Activated CD8-positive, alpha-beta T cell treated with anti-CD3 and anti-CD28 coated beads, Interleukin-2, amount 10 ng/mL, durations not matched to agents 7 days and 5 days (primary cell): ENCODE measurements at regions of chr10 and their contacts with region 1.

Region 1: DNA sequence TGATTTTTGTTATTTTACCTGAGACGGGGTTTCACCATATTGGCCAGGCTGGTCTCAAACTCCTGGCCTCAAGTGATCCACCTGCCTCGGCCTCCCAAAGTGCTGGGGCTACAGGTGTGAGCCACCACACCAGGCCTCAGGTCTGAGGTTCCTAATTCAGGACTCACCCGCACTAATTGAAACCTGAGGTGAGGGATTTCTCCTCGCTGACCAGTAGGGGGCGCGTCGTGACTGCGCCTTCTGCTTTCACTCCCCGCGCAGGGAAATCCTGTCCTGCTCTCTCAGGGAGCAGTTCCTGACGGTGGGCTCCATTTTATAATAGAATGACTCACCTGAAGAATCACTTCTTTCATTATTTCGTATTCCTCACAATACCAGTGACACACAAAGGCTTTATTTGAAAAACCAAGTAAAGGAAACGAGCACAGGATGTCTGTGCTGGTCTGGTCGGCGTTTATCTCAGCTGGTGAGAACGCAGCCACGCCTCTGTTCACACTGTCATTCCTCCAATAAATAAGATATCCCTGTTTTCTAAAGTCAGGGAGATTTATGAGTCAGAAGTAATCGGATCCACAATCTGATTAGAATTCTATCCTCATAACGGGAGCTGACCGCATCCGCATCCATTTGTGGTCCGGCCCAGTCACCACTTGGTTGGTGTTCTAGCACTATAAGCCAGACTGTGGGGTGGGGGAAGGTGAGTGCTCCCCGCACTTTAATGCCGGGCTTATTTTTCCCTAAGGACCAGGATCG is 35.4 kb downstream of the BAG3 start:
- DNase-seq: peak; percentile 80
- ATAC-seq: peak; percentile 93
- H3K4me3 Mint-ChIP-seq: peak overlapping the region; percentile 60
- H3K27ac Mint-ChIP-seq: peak overlapping the region; percentile 53
- H3K4me1 Mint-ChIP-seq: peaks cover 26% of the 10 kb centered on the region
- H3K27me3 Mint-ChIP-seq: peaks cover 4% of the 10 kb centered on the region

Region 2: GRCh38 chr10:119634219-119634544 is 52.4 kb before region 1 on chr10:
- CTCF ChIA-PET with region 1: no interaction called
- POLR2A ChIA-PET with region 1: no interaction called
- DNase-seq: no peak
- ATAC-seq: no peak
- H3K4me3 Mint-ChIP-seq: no peak overlapping the region
- H3K27ac Mint-ChIP-seq: no peak overlapping the region
- H3K4me1 Mint-ChIP-seq: no peaks in the 10 kb centered on the region
- H3K27me3 Mint-ChIP-seq: peaks cover 2% of the 10 kb centered on the region

Region 3: DNA sequence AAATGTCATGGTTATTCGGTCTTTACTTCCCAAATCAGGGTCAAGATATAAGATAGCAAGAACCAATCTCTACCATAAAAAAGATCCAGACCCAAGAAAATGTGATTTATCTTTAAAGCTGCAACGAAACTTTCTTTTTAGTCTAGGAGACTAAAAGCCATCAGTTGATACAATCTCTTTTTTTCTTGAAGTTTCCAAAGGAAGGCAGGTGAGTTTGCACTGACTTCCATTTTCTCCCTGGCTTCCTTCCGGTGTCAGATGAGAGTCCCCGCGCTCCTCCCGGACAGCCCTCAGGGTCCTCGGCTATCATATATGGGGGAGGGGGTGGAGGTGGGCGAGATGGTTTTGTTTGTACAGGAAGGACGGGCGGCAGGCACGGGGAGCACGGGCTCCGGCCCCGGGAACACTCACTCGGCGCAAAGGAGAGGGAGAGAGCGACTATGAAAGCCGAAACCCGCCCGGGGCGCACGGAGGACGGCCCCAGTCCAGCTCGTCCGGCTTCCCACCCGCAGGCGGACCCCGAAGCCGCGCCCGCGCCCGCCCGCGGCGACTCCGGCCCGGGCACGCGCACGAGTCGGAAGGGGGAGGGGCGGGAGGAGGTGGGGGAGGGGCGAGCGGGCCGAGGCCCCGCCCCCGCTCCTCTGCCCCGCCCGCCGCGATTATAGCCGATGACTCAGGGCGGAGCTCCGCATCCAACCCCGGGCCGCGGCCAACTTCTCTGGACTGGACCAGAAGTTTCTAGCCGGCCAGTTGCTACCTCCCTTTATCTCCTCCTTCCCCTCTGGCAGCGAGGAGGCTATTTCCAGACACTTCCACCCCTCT is 35.7 kb before region 1 on chr10 and contains the start of gene BAG3:
- CTCF ChIA-PET with region 1: interaction called, 10 read pairs
- POLR2A ChIA-PET with region 1: no interaction called
- DNase-seq: peak; percentile 86
- ATAC-seq: peak; percentile 78
- H3K4me3 Mint-ChIP-seq: peak within 1 kb of the TSS; percentile 95
- H3K27ac Mint-ChIP-seq: peak within 1 kb of the TSS; percentile 97
- H3K4me1 Mint-ChIP-seq: peaks cover 41% of the 10 kb centered on the region
- H3K27me3 Mint-ChIP-seq: peaks cover 2% of the 10 kb centered on the region
- total RNA-seq, gene BAG3: 14.2 to 14.7 TPM

Region 4: DNA sequence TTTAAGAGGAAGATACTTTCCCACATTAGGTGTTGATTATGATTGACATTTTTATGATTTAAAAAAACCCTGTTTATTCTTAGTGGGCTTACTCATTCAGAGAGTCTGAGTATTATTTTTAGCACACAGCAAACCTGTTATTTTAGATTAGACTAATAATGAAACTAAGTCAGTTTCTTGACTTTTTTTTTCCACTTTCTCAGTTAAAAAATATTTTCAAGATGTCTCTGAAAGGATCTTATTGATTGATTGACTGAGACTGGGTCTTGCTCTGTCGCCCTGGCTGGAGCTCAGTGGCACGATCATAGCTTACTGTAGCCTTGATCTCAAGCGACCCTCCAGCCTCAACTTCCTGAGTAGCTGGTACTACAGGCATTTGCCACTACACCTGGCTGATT is 18.8 kb after region 1 on chr10:
- CTCF ChIA-PET with region 1: interaction called, 25 read pairs
- POLR2A ChIA-PET with region 1: interaction called, 6 read pairs
- DNase-seq: no peak
- ATAC-seq: peak; percentile 59
- H3K4me3 Mint-ChIP-seq: peak overlapping the region; percentile 22
- H3K27ac Mint-ChIP-seq: peak overlapping the region; percentile 86
- H3K4me1 Mint-ChIP-seq: peaks cover 29% of the 10 kb centered on the region
- H3K27me3 Mint-ChIP-seq: no peaks in the 10 kb centered on the region

Region 5: GRCh38 chr10:119725828-119726675 is 39.4 kb after region 1 on chr10 and contains the start of gene INPP5F:
- CTCF ChIA-PET with region 1: interaction called, 57 read pairs
- POLR2A ChIA-PET with region 1: interaction called, 3 read pairs
- DNase-seq: peak; percentile 99
- ATAC-seq: peak; percentile 94
- H3K4me3 Mint-ChIP-seq: peak within 1 kb of the TSS; percentile 87
- H3K27ac Mint-ChIP-seq: peak within 1 kb of the TSS; percentile 81
- H3K4me1 Mint-ChIP-seq: peaks cover 46% of the 10 kb centered on the region
- H3K27me3 Mint-ChIP-seq: no peaks in the 10 kb centered on the region
- total RNA-seq, gene INPP5F: 15.9 to 17.6 TPM

Region 6: GRCh38 chr10:119750391-119751230 is 64.0 kb after region 1 on chr10:
- CTCF ChIA-PET with region 1: interaction called, 76 read pairs
- POLR2A ChIA-PET with region 1: no interaction called
- DNase-seq: peak; percentile 72
- ATAC-seq: peak; percentile 75
- H3K4me3 Mint-ChIP-seq: no peak overlapping the region
- H3K27ac Mint-ChIP-seq: no peak overlapping the region
- H3K4me1 Mint-ChIP-seq: peaks cover 1% of the 10 kb centered on the region
- H3K27me3 Mint-ChIP-seq: no peaks in the 10 kb centered on the region

Region 7: GRCh38 chr10:119859420-119860258 is 173.0 kb after region 1 on chr10:
- CTCF ChIA-PET with region 1: interaction called, 89 read pairs
- POLR2A ChIA-PET with region 1: no interaction called
- DNase-seq: no peak
- ATAC-seq: peak; percentile 61
- H3K4me3 Mint-ChIP-seq: no peak overlapping the region
- H3K27ac Mint-ChIP-seq: no peak overlapping the region
- H3K4me1 Mint-ChIP-seq: peaks cover 41% of the 10 kb centered on the region
- H3K27me3 Mint-ChIP-seq: no peaks in the 10 kb centered on the region